Left cardiac atrium (tissue), 4 donors: ENCODE measurements at regions of chr10 and their contacts with region 1.

Region 1: GRCh38 chr10:97736902-97737769 is at the start of gene ZFYVE27:
- DNase-seq: peak; percentile 97
- ATAC-seq: peak; percentile 96 to 98
- total RNA-seq, gene ZFYVE27: 15.7 to 19.5 TPM

Region 2: DNA sequence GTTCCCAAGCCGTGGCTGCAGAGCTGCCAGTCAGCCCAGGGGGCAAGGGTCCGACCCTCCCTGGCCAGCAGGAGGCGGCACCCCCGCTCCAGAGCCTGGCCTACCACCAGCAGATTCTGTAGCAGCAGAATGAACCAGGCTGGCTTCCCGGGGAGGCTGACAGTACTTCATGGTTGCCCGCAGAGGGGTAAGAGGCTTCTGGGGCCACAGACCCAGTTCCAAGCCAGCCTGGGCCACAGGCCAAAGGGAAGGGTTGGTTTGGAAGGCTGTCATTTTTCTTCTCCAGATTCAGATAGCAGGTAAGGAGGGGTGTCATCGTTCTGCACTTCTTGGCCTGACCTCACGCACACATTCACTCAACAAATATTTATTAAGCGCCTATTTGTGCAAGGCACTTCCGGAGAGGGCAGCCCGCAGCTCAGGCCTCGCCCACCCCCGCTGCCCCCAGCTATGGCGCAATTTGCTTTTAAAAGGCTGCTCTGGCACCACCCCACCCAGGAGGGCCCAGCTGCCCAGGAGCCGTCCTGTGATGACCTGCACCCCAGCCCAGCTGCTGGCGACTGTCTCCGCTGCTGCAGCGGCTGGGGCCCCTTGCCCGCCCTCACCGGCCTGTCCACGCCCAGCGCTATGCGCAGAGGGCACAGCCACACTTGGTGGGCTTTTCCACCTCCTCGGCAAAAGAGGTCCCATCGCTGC is 736.5 kb before region 1 on chr10:
- intact Hi-C with region 1: no loop called
- DNase-seq: no peak
- ATAC-seq: no peak

Region 3: GRCh38 chr10:97701438-97702069 is 35.6 kb before region 1 on chr10:
- intact Hi-C with region 1: loop called (anchors 5 kb)
- DNase-seq: no peak
- ATAC-seq: peak; percentile 93 to 94